Posterior vena cava (tissue), 2 donors: ENCODE measurements at regions of chr2 and their contacts with region 1.

Region 1: DNA sequence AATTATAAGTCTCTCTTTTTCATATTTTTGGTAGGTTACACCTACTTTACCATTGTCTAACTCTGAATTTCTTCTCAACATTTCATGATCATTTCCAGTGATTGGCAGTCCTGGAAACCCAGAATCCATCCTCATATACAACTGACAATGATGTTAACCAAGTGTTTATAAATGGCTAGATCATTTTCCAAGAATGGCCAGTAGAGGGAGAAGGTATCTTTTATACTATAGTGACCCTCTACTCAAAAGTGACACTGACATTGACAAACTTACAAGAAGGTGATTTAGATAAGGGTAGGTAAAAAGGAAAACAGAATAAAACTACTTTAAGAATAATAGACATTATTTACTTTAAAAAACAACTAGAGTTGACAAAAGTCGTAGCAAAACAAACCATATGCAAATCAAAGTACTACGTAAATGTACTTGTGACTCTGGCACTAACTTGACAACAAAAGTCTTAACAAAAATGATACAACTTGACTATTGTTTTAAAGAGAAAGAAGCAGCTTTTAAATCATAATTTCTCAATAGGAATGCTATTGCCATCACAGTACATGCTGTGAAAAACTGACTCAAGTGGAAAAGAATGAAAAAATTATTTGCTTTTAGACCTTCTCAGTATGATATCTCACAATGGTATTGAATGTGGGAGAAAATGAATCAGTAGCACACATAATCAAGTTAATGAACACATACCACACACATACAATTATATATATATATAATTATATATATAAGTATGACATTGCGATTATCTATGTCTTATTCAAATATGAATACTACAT is 76.6 kb upstream of the GRB14 start:
- DNase-seq: no peak

Region 2: DNA sequence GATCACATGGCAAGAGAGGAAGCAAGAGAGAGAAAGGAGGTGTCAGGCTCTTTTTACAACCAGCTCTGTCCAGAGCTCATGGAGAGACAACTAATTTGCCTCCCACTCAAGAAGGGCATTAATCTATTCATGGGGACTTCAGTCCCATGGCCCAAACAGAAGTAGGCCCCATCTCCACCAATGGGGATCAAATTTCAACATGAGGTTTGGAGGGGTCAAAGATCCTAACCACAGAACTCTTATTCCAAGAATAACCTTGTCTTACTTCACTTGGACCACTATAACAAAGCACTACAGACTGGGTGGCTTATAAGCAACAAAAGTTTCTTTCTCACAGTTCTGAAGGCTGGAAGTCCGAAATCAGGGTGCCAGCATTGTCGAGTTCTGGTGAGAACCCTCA is 108.3 kb before region 1 on chr2:
- intact Hi-C with region 1: loop called in 1 of 2 experiments (anchors 5 kb)
- DNase-seq: no peak